ENCODE measurements at regions of chr12 and their contacts with region 1.

Region 1: DNA sequence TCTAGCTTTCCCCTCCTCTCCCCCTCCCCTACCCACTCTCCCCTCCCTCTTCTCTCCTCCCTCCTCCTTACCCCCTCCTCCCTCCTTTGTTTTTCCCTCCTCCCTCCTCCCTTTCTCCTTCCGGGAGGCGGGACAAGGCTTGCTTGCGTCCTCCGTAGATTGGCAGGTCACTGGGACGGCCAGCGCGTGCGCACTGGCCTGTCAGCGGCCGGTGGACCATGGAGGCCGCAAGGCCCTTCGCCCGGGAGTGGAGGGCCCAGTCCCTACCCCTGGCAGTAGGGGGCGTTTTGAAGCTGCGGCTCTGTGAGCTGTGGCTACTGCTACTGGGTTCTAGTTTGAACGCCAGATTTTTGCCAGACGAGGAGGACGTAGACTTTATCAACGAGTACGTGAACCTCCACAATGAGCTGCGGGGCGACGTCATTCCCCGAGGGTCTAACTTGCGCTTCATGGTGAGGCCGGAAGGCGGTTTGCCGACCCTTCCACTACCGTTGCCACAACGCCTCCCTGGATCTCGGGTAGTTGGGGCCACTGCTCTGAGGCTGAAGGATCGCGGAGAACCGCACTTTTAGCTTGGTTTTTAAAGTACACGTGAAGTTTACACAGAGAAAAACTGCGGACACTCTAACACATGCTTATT is at the start of gene GLIPR1L2:
- DNase-seq: peak; percentile 99
- ATAC-seq: peak; percentile 95
- H3K4me3 ChIP-seq: peak within 1 kb of the TSS; percentile 79
- H3K27ac ChIP-seq: peak within 1 kb of the TSS; percentile 54
- H3K4me1 ChIP-seq: peaks cover 31% of the 10 kb centered on the region
- H3K27me3 ChIP-seq: no peaks in the 10 kb centered on the region
- CTCF ChIP-seq: peak; percentile 90
- total RNA-seq, gene GLIPR1L2: not detected in 2 replicates

Region 2: GRCh38 chr12:75334384-75335030 is 56.5 kb before region 1 on chr12 and contains the start of gene GLIPR1L1:
- CTCF ChIA-PET with region 1: interaction called, 3 read pairs
- POLR2A ChIA-PET with region 1: no interaction called
- intact Hi-C with region 1: loop called (anchors 5 kb)
- DNase-seq: peak; percentile 81
- ATAC-seq: peak; percentile 26; the same call in 1 of the 2 replicates
- H3K4me3 ChIP-seq: no peak within 1 kb of the TSS
- H3K27ac ChIP-seq: no peak within 1 kb of the TSS
- H3K4me1 ChIP-seq: no peaks in the 10 kb centered on the region; the same call in 1 of the 2 replicates
- H3K27me3 ChIP-seq: no peaks in the 10 kb centered on the region
- CTCF ChIP-seq: peak; percentile 81
- total RNA-seq, gene GLIPR1L1: not detected in 2 replicates

Region 3: DNA sequence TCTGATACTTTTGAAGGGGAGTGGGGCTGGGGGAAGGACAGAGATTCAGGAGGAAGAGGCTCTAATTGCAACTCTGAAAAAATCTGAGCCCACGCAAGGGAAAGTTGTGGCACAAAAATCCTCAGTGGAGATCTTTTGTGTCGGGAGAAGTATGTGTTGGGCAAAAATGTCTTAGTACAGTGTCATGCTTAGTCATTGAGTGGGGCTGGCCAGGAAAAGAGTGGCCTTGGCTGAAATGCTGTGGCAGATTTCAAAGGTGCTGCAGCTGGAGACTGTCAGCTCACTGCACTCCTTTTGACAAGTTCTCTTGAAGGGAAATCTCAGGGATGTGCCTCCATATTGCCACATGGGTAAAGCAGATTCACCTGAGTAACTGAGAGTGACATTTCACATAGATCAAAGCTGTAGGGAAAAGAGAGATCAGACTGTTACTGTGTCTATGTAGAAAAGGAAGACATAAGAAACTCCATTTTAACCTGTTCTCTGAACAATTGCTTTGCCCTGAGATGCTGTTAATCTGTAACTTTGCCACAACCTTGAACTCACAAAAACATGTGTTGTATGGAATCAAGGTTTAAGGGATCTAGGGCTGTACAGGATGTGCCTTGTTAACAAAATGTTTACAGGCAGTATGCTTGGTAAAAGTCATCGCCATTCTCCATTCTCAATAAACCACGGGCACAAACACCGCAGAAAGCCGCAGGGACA is 53.6 kb after region 1 on chr12:
- CTCF ChIA-PET with region 1: no interaction called
- POLR2A ChIA-PET with region 1: no interaction called
- intact Hi-C with region 1: loop called (anchors 2 kb)
- DNase-seq: peak; percentile 75
- ATAC-seq: peak; percentile 76
- H3K4me3 ChIP-seq: no peak overlapping the region
- H3K27ac ChIP-seq: peak overlapping the region; percentile 51
- H3K4me1 ChIP-seq: peaks cover 48% of the 10 kb centered on the region
- H3K27me3 ChIP-seq: no peaks in the 10 kb centered on the region
- CTCF ChIP-seq: no peak

Region 4: DNA sequence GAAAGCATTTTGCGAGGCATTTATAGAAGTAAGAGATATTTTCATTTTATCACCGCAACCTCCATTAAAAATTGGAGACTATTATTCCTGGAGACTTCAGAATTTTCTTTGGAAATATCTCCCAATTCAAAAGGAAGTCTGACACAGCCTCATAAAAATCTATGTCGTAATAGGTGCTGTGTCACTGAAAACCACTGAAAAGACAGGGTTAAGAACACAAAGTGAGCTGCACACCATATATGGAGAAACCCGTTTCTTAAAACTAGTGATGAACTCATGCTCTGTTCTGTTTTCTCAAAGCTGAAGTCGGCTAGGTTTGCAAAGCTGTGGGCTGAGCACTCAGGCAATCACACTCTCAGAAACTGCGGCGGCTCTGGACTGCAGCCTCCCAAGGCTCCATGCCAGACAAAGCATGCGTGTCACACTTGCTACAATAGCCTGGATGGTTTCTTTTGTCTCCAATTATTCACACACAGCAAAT is 89.5 kb after region 1 on chr12 and contains the start of gene GLIPR1:
- CTCF ChIA-PET with region 1: interaction called, 7 read pairs
- POLR2A ChIA-PET with region 1: interaction called, 11 read pairs
- intact Hi-C with region 1: loop called (anchors 2 kb)
- DNase-seq: peak; percentile 95
- ATAC-seq: peak; percentile 92
- H3K4me3 ChIP-seq: peak within 1 kb of the TSS; percentile 67
- H3K27ac ChIP-seq: peak within 1 kb of the TSS; percentile 77
- H3K4me1 ChIP-seq: peaks cover 32% of the 10 kb centered on the region
- H3K27me3 ChIP-seq: no peaks in the 10 kb centered on the region
- CTCF ChIP-seq: no peak
- total RNA-seq, gene GLIPR1: 21.3 and 22.2 TPM in 2 replicates

Region 5: DNA sequence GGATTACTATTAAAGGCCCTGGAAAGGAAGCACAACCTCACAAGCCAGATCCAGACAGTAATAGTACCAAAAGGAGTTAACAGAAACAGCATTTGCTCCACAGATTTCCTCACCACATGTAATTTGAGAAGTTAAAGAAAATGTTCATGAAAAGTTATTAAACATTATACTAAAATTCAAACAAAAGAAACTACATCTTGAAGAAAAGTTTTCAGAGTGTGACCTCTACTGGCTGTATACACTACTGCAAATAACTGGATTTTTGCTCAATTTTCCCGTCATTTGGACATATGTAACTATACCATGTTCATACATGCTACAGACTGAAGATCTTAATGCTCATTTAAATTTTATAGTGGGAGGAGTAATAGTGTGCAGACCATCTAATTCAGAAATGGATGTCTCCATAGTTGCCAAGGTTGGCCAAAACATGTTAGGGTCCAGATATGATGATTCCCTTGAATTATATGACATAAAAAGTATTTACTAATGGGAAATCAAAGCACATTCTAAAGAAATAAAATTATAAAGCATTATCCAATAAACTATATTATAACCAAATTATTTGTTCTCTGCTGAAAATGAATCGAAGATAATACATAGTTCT is 114.8 kb after region 1 on chr12:
- CTCF ChIA-PET with region 1: interaction called, 3 read pairs
- POLR2A ChIA-PET with region 1: no interaction called
- intact Hi-C with region 1: loop called (anchors 1 kb)
- DNase-seq: peak; percentile 64
- ATAC-seq: peak; percentile 37; the same call in 1 of the 2 replicates
- H3K4me3 ChIP-seq: no peak overlapping the region
- H3K27ac ChIP-seq: no peak overlapping the region
- H3K4me1 ChIP-seq: peaks cover 13% of the 10 kb centered on the region; the same call in 1 of the 2 replicates
- H3K27me3 ChIP-seq: no peaks in the 10 kb centered on the region
- CTCF ChIP-seq: peak; percentile 87

Region 6: GRCh38 chr12:75603475-75603874 is 212.5 kb after region 1 on chr12:
- CTCF ChIA-PET with region 1: no interaction called
- POLR2A ChIA-PET with region 1: no interaction called
- intact Hi-C with region 1: no loop called
- DNase-seq: no peak
- ATAC-seq: no peak
- H3K4me3 ChIP-seq: no peak overlapping the region
- H3K27ac ChIP-seq: no peak overlapping the region
- H3K4me1 ChIP-seq: no peaks in the 10 kb centered on the region
- H3K27me3 ChIP-seq: no peaks in the 10 kb centered on the region
- CTCF ChIP-seq: no peak

Measured in PC-3 (cell line).